ENCODE measurements at regions of chr7 and their contacts with region 1.

Region 1: GRCh38 chr7:28083164-28083997 is 97.2 kb downstream of the JAZF1 start:
- DNase-seq: no peak
- ATAC-seq: peak; percentile 81 to 86
- H3K4me3 ChIP-seq: no peak overlapping the region
- H3K27ac ChIP-seq: peak overlapping the region; percentile 44
- H3K4me1 ChIP-seq: peaks cover 31% of the 10 kb centered on the region
- H3K27me3 ChIP-seq: no peaks in the 10 kb centered on the region
- CTCF ChIP-seq: no peak

Region 2: DNA sequence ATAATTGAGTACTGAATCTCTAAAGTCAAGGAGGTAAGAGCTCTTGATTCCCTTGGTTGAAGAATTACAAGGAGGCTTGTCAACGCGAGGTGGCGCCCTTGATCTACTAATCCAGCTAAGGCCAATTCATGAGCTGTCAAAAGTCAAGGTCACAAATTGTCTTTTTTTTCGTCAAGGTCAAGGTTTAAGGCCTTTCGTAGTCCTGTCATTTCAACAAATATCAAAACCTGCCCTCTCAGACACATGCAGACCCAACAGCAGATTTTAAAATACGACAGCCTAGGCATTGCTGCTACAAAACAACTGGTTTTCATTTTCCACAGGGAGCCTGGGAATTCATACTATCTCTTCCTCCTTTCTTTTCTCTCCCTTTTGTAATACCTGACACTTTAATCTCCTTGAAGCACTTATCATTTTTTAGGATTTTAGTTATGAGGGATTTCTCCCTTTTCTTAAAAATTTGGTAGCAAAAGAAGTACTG is 887.1 kb before region 1 on chr7:
- intact Hi-C with region 1: loop called (anchors 10 kb)
- DNase-seq: peak; percentile 87
- ATAC-seq: peak in 1 of 2 donors; percentile 59
- H3K4me3 ChIP-seq: no peak overlapping the region
- H3K27ac ChIP-seq: no peak overlapping the region
- H3K4me1 ChIP-seq: peaks cover 46% of the 10 kb centered on the region
- H3K27me3 ChIP-seq: peaks cover 94% of the 10 kb centered on the region
- CTCF ChIP-seq: peak; percentile 80